Dorsolateral prefrontal cortex (tissue), 120 donors: ENCODE measurements at regions of chr14 and their contacts with region 1.

Region 1: GRCh38 chr14:53152890-53153701 is at the start of gene DDHD1:
- DNase-seq: peak; percentile 58 to 88 (median 68)
- H3K4me3 ChIP-seq: peak within 1 kb of the TSS; percentile 65 to 98 (median 90)
- H3K27ac ChIP-seq: peak within 1 kb of the TSS; percentile 42 to 96 (median 89)
- H3K27me3 ChIP-seq: no peaks in the 10 kb centered on the region
- CTCF ChIP-seq: peak in 15 of 56 donors; percentile 7 to 46 (median 20)
- total RNA-seq, gene DDHD1: 26.9 to 70.6 (median 49.7) TPM

Region 2: DNA sequence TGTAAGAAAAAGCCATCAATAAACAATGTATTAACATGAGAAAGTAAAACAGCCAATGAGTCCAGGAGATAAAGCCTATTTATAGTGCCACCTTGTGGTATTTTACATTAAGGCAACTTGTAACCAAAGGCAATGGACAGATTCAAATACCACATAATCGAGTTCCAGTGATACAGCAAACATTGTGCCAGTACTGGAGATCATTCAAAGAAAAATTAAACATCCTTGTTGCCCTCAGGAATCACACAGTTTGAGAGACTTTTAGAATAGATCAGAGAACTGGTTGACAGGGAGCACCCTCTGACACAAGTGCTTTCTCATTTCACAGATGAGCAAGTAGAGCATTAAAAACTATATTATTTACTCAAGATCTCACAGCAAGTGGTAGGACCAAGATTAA is 98.1 kb before region 1 on chr14:
- intact Hi-C with region 1: loop called (anchors 5 kb)
- DNase-seq: no peak
- H3K4me3 ChIP-seq: no peak overlapping the region
- H3K27ac ChIP-seq: peak overlapping the region in 29 of 59 donors; percentile 5 to 73 (median 44)
- H3K27me3 ChIP-seq: no peaks in the 10 kb centered on the region
- CTCF ChIP-seq: peak; percentile 65 to 94 (median 83)

Region 3: DNA sequence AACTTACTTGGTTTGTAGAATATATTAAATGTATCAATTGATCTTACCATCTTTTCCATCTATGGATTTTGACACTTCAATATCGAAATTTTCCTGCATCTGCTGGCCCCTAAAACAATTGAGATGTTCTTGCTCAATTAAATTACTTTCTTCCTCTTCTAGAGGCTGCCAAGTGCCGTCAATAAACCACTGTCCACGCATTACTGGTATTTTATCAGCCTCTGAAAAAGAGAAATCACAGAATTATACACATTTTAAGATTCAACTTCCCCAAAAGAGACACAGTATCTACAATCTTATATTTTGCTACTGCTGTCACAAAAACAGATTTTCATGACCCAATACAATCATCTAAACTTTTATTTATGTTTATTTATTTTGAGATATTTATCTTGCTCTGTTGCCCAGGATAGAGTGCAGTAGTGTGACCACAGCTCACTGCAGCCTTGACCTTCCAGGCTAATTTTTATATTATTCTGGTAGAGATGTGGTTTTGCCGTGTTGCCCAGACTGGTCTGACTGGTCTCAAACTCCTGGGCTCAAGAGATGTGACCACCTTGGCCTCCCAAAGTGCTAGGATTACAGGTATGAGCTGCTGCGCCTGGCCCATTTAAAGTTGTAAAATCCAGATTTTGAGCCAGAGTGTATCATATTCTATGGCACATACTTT is 49.3 kb before region 1 on chr14:
- intact Hi-C with region 1: no loop called
- DNase-seq: no peak
- H3K4me3 ChIP-seq: no peak overlapping the region
- H3K27ac ChIP-seq: no peak overlapping the region
- H3K27me3 ChIP-seq: no peaks in the 10 kb centered on the region
- CTCF ChIP-seq: no peak

Region 4: GRCh38 chr14:53217295-53217994 is 64.3 kb after region 1 on chr14:
- intact Hi-C with region 1: loop called in 1 of 2 experiments (anchors 5 kb)
- DNase-seq: peak in 6 of 10 donors; percentile 16 to 74 (median 36)
- H3K4me3 ChIP-seq: peak overlapping the region; percentile 45 to 80 (median 66)
- H3K27ac ChIP-seq: peak overlapping the region in 13 of 59 donors; percentile 7 to 75 (median 27)
- H3K27me3 ChIP-seq: no peaks in the 10 kb centered on the region
- CTCF ChIP-seq: peak in 48 of 56 donors; percentile 19 to 61 (median 42)